Heart left ventricle (tissue), 16 donors: ENCODE measurements at regions of chr19 and their contacts with region 1.

Region 1: DNA sequence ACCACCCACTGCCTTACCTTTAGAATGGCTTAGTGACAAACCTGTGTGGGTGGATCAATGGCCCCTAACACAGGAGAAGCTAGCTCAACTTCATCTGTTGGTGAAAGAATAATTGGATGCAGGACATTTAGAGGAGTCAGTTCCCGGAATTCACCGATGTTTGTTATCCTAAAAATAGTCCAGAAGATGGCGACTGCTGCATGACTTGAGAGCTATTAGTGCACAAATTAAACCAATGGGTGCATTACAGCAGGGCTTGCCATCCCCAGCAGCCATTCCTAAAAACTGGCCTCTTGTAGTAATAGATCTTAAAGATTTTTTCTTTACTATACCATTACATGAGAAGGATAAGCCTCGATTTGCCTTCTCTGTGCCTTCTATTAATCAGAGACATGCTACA is 46.8 kb upstream of the ZNF726 start:
- DNase-seq: no peak
- ATAC-seq: no peak
- H3K4me3 ChIP-seq: no peak overlapping the region
- H3K27ac ChIP-seq: no peak overlapping the region
- H3K4me1 ChIP-seq: no peaks in the 10 kb centered on the region
- H3K27me3 ChIP-seq: no peaks in the 10 kb centered on the region
- CTCF ChIP-seq: no peak
- POLR2A ChIP-seq: no peak

Region 2: DNA sequence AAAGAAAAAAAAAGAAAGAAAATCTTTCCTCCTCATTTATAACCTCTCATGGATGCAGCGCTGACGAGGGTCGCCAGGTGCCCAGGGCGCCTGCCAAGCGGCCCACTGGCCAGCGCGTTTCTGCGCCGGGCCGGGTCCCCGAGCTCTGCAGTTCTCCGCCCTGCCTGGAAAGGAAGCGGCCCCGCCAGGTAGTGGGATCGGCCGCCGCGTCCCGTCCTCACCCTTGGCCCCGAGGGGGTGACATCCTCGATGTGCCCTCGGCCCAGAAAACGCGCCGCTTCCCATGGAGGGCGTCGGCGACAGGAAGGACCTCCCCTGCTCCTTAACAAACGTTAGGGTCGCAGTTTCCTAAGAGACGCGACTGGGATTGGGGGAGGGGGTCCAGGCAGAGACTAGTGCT is 103.7 kb after region 1 on chr19:
- intact Hi-C with region 1: loop called in 8 of 10 experiments (anchors 2 to 5 kb)
- DNase-seq: no peak
- ATAC-seq: no peak
- H3K4me3 ChIP-seq: peak overlapping the region in 5 of 12 donors; percentile 8 to 30 (median 16)
- H3K27ac ChIP-seq: no peak overlapping the region
- H3K4me1 ChIP-seq: peaks cover 0 to 8% (median 0%) of the 10 kb centered on the region in 12 donors
- H3K27me3 ChIP-seq: peaks cover 8 to 53% (median 19%) of the 10 kb centered on the region in 9 donors
- CTCF ChIP-seq: no peak
- POLR2A ChIP-seq: no peak

Region 3: GRCh38 chr19:24101459-24102115 is 233.7 kb after region 1 on chr19:
- intact Hi-C with region 1: no loop called
- DNase-seq: no peak
- ATAC-seq: peak in 1 of 4 donors; percentile 13
- H3K4me3 ChIP-seq: no peak overlapping the region
- H3K27ac ChIP-seq: no peak overlapping the region
- H3K4me1 ChIP-seq: peaks cover 0 to 39% (median 11%) of the 10 kb centered on the region in 12 donors
- H3K27me3 ChIP-seq: no peaks in the 10 kb centered on the region
- CTCF ChIP-seq: no peak
- POLR2A ChIP-seq: no peak